OCI-LY7 (cell line): ENCODE measurements at regions of chr22 and their contacts with region 1.

Region 1: GRCh38 chr22:37244114-37244921 is at the start of gene RAC2:
- DNase-seq: peak; percentile 95
- H3K4me3 ChIP-seq: peak within 1 kb of the TSS; percentile 97
- H3K27ac ChIP-seq: peak within 1 kb of the TSS; percentile 93
- H3K4me1 ChIP-seq: peaks cover 76% of the 10 kb centered on the region
- CTCF ChIP-seq: no peak
- total RNA-seq, gene RAC2: 91.5 and 142 TPM in 2 replicates

Region 2: DNA sequence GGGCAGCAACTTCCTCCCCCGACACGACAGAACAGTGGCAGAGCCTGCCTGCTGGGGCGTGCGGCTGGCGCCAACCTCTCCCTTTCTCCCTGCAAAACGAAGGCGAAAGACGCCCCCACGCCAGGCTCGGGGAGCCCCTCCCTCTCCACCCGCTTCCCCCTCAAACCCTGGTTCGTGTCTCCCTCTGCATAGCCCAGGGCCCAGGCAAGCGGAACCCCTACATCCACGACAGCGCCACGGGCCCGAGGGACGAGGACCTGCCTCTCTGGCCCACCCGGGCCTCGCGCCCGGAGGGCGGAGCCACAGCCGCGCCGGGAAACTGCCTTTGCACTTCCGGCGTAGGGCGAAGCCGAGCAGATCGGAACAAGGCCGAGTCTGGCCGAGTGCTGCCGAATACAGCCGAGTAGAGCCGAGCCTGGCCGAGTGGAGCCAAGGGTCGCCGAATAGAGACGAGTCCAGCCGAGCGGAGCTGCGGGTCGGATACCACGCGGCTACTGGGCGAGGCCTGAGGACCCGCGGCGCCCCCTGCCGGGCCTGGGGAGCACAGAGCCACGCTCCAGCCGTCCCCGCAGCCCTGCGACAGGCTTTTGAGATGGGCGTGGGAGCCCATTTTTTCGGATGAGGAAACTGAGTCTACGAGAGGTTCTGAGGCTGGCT is 45.1 kb before region 1 on chr22:
- CTCF ChIA-PET with region 1: interaction called, 6 read pairs
- POLR2A ChIA-PET with region 1: interaction called, 6 read pairs
- intact Hi-C with region 1: loop called (anchors 1 kb)
- DNase-seq: peak; percentile 99
- H3K4me3 ChIP-seq: peak overlapping the region; percentile 80
- H3K27ac ChIP-seq: peak overlapping the region; percentile 86
- H3K4me1 ChIP-seq: peaks cover 33% of the 10 kb centered on the region
- CTCF ChIP-seq: peak; percentile 83

Region 3: GRCh38 chr22:37218771-37219411 is 25.4 kb before region 1 on chr22:
- CTCF ChIA-PET with region 1: interaction called, 3 read pairs
- POLR2A ChIA-PET with region 1: interaction called, 4 read pairs
- intact Hi-C with region 1: loop called (anchors 2 kb)
- DNase-seq: peak; percentile 87
- H3K4me3 ChIP-seq: peak overlapping the region; percentile 35
- H3K27ac ChIP-seq: peak overlapping the region; percentile 84
- H3K4me1 ChIP-seq: peaks cover 49% of the 10 kb centered on the region
- CTCF ChIP-seq: no peak

Region 4: GRCh38 chr22:37229805-37230672 is 14.3 kb before region 1 on chr22:
- CTCF ChIA-PET with region 1: interaction called, 20 read pairs
- POLR2A ChIA-PET with region 1: interaction called, 26 read pairs
- intact Hi-C with region 1: loop called (anchors 1 kb)
- DNase-seq: peak; percentile 92
- H3K4me3 ChIP-seq: peak overlapping the region; percentile 28
- H3K27ac ChIP-seq: peak overlapping the region; percentile 89
- H3K4me1 ChIP-seq: peaks cover 83% of the 10 kb centered on the region
- CTCF ChIP-seq: no peak

Region 5: GRCh38 chr22:37260901-37261336 is 16.6 kb after region 1 on chr22:
- CTCF ChIA-PET with region 1: interaction called, 8 read pairs
- POLR2A ChIA-PET with region 1: interaction called, 19 read pairs
- intact Hi-C with region 1: loop called (anchors 1 kb)
- DNase-seq: peak; percentile 78
- H3K4me3 ChIP-seq: no peak overlapping the region
- H3K27ac ChIP-seq: no peak overlapping the region
- H3K4me1 ChIP-seq: peaks cover 26% of the 10 kb centered on the region
- CTCF ChIP-seq: peak; percentile 97

Region 6: GRCh38 chr22:37561212-37562048 is 317.1 kb after region 1 on chr22:
- CTCF ChIA-PET with region 1: no interaction called
- POLR2A ChIA-PET with region 1: no interaction called
- intact Hi-C with region 1: no loop called
- DNase-seq: peak; percentile 73
- H3K4me3 ChIP-seq: no peak overlapping the region
- H3K27ac ChIP-seq: no peak overlapping the region
- H3K4me1 ChIP-seq: no peaks in the 10 kb centered on the region
- CTCF ChIP-seq: peak; percentile 84